ENCODE measurements at regions of chr11 and their contacts with region 1.

Region 1: GRCh38 chr11:61639816-61640443 is 40.3 kb upstream of the DAGLA start:
- DNase-seq: no peak
- ATAC-seq: no peak
- H3K4me3 Mint-ChIP-seq: no peak overlapping the region
- H3K27ac Mint-ChIP-seq: no peak overlapping the region
- H3K4me1 Mint-ChIP-seq: 0 out of 2 replicates have a peak, but pooled peaks cover 6% of the 10 kb centered on the region
- H3K27me3 Mint-ChIP-seq: no peaks in the 10 kb centered on the region
- CTCF ChIP-seq: no peak

Region 2: GRCh38 chr11:61429691-61430582 is 210.0 kb before region 1 on chr11 and contains the starts of genes CPSF7 and SDHAF2:
- CTCF ChIA-PET with region 1: interaction called, 16 read pairs
- POLR2A ChIA-PET with region 1: no interaction called
- DNase-seq: peak; percentile 97
- ATAC-seq: peak; percentile 86
- H3K4me3 Mint-ChIP-seq: peak within 1 kb of the TSS; percentile 100
- H3K27ac Mint-ChIP-seq: peak within 1 kb of the TSS; percentile 100
- H3K4me1 Mint-ChIP-seq: peaks cover 20% of the 10 kb centered on the region
- H3K27me3 Mint-ChIP-seq: no peaks in the 10 kb centered on the region
- CTCF ChIP-seq: no peak
- total RNA-seq, gene CPSF7: 86.0 to 90.7 TPM (median 88.3 TPM) in 3 replicates
- total RNA-seq, gene SDHAF2: 36.2 to 36.8 TPM (median 36.5 TPM) in 3 replicates

Region 3: DNA sequence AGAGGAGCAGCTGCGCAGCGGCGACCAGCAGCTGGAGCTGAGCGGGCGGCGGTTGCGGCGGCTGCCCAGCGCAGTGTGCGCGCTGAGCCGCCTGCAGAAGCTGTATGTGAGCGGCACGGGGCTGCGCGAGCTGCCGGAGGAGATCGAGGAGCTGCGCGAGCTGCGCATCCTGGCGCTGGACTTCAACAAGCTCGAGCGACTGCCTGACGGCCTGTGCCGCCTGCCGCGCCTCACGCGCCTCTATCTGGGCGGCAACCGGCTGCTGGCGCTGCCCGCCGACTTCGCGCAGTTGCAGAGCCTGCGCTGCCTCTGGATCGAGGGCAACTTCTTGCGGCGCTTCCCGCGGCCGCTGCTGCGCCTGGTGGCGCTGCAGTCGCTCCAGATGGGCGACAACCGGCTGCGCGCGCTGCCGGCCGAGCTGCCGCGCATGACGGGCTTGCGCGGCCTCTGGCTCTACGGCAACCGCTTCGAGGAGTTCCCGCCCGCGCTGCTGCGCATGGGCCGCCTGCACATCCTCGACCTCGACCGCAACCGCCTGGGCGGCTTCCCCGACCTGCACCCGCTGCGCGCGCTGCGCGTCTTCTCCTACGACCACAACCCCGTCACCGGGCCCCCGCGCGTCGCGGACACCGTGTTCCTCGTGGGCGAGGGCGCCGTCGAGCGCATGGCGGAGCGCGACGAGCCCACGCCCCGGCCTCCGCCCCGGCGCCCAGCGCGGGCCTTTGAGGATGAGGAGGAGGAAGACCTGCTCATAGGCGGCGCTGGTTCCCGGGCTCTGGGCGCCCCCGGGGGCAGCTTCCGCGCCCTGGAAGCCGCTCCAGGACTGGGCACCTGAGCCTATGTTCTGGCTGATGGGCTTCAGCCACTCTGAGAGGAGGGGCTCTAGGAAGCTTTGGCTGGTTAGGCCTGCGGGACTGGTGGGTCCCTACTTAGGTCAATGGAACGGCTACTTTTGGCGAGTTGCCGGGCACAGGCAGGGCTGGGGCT is 130.6 kb before region 1 on chr11:
- CTCF ChIA-PET with region 1: interaction called, 19 read pairs
- POLR2A ChIA-PET with region 1: no interaction called
- DNase-seq: peak; percentile 80
- ATAC-seq: peak; percentile 63
- H3K4me3 Mint-ChIP-seq: peak overlapping the region; percentile 48
- H3K27ac Mint-ChIP-seq: no peak overlapping the region
- H3K4me1 Mint-ChIP-seq: peaks cover 58% of the 10 kb centered on the region
- H3K27me3 Mint-ChIP-seq: peaks cover 59% of the 10 kb centered on the region
- CTCF ChIP-seq: no peak

Region 4: GRCh38 chr11:61567286-61568061 is 72.5 kb before region 1 on chr11:
- CTCF ChIA-PET with region 1: interaction called, 23 read pairs
- POLR2A ChIA-PET with region 1: no interaction called
- DNase-seq: peak; percentile 90
- ATAC-seq: peak; percentile 86
- H3K4me3 Mint-ChIP-seq: peak overlapping the region; percentile 59
- H3K27ac Mint-ChIP-seq: no peak overlapping the region
- H3K4me1 Mint-ChIP-seq: peaks cover 28% of the 10 kb centered on the region
- H3K27me3 Mint-ChIP-seq: peaks cover 19% of the 10 kb centered on the region
- CTCF ChIP-seq: peak; percentile 99

Region 5: DNA sequence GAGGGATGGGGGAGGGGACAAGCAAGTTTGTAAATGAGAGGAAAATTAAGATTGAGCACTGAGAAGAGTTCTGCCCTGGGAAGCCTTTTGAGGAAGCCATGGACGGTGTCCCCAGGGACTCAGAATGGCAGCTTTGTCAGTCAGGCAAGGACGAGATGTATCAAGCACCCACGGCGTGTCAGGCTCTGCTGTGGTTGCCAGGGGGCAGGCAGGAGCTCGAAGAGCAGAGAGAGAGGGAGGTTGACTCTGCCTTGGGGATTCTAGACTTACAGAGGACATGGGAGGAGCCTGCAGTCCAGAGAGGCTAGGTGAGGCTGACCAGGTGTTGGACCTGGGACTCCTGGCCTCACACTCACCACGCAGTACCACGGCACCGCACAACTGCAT is 30.0 kb before region 1 on chr11:
- CTCF ChIA-PET with region 1: interaction called, 19 read pairs
- POLR2A ChIA-PET with region 1: no interaction called
- DNase-seq: peak; percentile 67
- ATAC-seq: peak; percentile 93
- H3K4me3 Mint-ChIP-seq: no peak overlapping the region
- H3K27ac Mint-ChIP-seq: no peak overlapping the region
- H3K4me1 Mint-ChIP-seq: peaks cover 21% of the 10 kb centered on the region
- H3K27me3 Mint-ChIP-seq: peaks cover 2% of the 10 kb centered on the region; the same call in 1 of the 2 replicates
- CTCF ChIP-seq: no peak

Region 6: DNA sequence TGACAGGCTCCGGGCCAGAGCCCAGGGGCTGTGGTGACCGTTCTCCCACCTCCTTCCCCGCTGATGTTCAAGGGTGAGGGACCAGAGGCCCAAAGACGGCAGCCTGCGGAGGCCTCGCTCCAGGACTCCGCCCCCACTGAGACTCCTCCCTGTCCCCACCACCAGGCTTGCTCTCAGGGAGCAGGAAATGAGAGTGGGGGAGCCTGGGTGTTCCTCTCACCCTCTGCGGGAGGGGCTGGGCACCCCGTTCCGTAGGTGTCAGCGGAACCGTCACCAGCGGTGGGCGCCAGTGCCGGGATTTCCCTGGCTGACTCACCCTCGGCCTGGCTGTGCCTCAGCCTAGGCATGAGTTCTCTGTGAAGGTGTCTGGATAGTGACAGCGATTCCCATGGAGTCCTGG is 56.0 kb after region 1 on chr11:
- CTCF ChIA-PET with region 1: interaction called, 20 read pairs
- POLR2A ChIA-PET with region 1: no interaction called
- DNase-seq: no peak
- ATAC-seq: peak; percentile 51
- H3K4me3 Mint-ChIP-seq: no peak overlapping the region
- H3K27ac Mint-ChIP-seq: no peak overlapping the region
- H3K4me1 Mint-ChIP-seq: peaks cover 49% of the 10 kb centered on the region
- H3K27me3 Mint-ChIP-seq: no peaks in the 10 kb centered on the region; the same call in 1 of the 2 replicates
- CTCF ChIP-seq: no peak

Region 7: DNA sequence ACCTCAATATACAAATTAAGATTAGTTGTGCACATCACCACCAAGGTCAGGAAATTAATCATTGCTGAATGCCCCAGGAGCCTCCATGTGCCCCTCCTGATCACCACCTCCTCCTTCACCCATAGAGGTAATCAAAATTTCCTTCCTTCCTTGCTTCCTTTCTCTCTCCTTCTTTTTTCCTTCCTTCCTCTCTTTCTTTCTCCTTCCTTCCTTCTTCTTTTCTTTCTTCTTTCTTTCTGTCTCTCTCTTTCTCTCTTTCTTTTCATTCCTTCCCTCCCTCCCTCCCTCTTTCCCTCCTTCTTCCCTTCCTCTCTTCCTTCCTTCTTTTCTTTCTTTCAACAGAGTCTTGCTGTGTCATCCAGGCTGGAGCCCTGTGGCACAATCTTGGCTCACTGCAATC is 395.4 kb after region 1 on chr11:
- CTCF ChIA-PET with region 1: no interaction called
- POLR2A ChIA-PET with region 1: no interaction called
- DNase-seq: no peak
- ATAC-seq: no peak
- H3K4me3 Mint-ChIP-seq: no peak overlapping the region
- H3K27ac Mint-ChIP-seq: no peak overlapping the region
- H3K4me1 Mint-ChIP-seq: peaks cover 17% of the 10 kb centered on the region
- H3K27me3 Mint-ChIP-seq: peaks cover 6% of the 10 kb centered on the region; the same call in 1 of the 2 replicates
- CTCF ChIP-seq: no peak